ENCODE measurements at regions of chr11 and their contacts with region 1.

Region 1: GRCh38 chr11:77127232-77127911 is 674 bp upstream of the MYO7A start:
- DNase-seq: no peak

Region 2: GRCh38 chr11:77154381-77155081 is 27.2 kb after region 1 on chr11:
- intact Hi-C with region 1: loop called (anchors 1 kb)
- DNase-seq: no peak

Region 3: DNA sequence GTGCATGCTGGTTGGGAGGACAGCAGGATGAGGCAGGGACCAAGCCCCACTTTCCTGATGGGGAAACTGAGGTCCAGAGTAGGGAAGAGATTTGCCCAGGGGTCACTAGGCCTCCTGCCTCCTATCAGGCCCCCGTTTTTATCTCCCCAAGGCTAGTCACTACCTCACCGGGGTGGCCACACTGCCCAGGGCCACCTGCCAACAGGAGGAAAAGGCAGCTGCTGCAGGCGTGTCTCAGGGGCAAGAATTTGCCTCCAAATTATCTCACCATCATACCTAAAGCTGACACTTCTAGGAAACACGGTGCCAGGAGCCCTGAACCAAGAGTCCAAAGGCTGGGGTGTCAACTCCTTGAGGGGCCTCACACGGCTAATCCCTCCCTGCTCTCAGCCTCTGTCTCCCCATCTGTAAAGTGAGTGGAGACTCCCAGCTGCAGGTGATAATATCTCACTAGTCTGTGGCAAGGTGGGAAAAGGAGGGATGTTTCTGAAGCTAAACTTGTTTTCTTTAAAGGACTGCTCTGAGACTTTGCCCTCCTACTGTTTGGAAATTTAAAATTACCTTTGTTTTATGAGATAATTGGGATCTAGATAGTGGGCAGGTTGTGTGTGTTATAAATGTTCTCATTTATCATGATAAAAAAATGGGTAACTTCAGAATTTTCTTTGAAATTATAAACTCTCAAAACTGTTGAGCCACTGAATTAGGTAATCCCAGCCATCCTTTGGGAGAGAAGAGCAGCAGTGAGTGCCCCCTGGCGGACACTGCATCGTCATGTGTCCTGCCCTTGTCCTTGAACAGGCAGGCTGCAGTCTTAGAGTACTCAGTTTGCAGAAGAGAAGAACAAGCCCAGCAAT is 60.6 kb after region 1 on chr11:
- intact Hi-C with region 1: loop called (anchors 1 kb)
- DNase-seq: peak; percentile 84

Region 4: DNA sequence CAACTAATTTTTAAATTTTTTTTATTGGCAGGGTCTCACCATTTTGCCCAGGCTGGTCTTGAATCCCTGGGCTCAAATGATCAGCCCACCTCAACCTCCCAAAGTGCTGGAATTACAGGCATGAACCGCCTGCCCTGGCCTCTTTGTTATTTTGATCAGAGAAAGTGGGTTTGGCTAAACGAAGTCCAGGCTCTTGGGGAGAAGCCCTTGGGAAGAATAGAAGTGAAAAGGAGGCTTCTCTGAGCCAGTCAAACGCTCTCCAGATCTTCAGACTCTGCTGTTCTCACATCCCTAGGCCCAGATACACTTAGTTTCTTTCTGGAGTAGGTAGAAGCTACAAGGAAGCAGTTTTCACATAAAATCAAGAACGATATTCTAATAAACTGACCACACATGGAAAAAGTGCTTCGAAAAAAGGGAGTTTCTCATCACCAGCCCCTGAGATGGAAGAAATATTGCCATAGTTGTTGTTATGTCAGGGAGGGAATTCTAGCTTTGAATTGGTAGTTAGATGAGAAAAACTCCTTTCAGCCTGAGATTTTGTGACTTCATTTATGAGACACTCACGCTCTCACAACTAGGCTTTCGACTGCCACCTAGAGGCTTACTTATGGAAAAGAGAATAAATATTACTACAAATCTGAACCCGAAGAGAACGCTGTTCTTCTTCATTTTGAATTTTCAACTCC is 420.6 kb after region 1 on chr11:
- intact Hi-C with region 1: loop called (anchors 5 kb)
- DNase-seq: no peak